ENCODE measurements at regions of chr1 and their contacts with region 1.

Region 1: GRCh38 chr1:32716312-32717148 is 14.0 kb upstream of the SYNC start:
- DNase-seq: peak; percentile 88
- ATAC-seq: peak; percentile 93
- H3K4me3 Mint-ChIP-seq: no peak overlapping the region
- H3K27ac Mint-ChIP-seq: no peak overlapping the region
- H3K4me1 Mint-ChIP-seq: peaks cover 12% of the 10 kb centered on the region
- H3K27me3 Mint-ChIP-seq: peaks cover 2% of the 10 kb centered on the region

Region 2: GRCh38 chr1:32521165-32521564 is 195.4 kb before region 1 on chr1:
- CTCF ChIA-PET with region 1: interaction called, 14 read pairs
- POLR2A ChIA-PET with region 1: no interaction called
- intact Hi-C with region 1: no loop called
- DNase-seq: peak; percentile 7
- ATAC-seq: no peak
- H3K4me3 Mint-ChIP-seq: peak overlapping the region; percentile 64
- H3K27ac Mint-ChIP-seq: no peak overlapping the region
- H3K4me1 Mint-ChIP-seq: peaks cover 6% of the 10 kb centered on the region
- H3K27me3 Mint-ChIP-seq: peaks cover 6% of the 10 kb centered on the region

Region 3: GRCh38 chr1:32753532-32754312 is 37.2 kb after region 1 on chr1:
- CTCF ChIA-PET with region 1: interaction called, 5 read pairs
- POLR2A ChIA-PET with region 1: no interaction called
- intact Hi-C with region 1: loop called in 1 of 2 experiments (anchors 5 kb)
- DNase-seq: peak; percentile 80
- ATAC-seq: peak; percentile 87
- H3K4me3 Mint-ChIP-seq: peak overlapping the region; percentile 53
- H3K27ac Mint-ChIP-seq: no peak overlapping the region
- H3K4me1 Mint-ChIP-seq: peaks cover 10% of the 10 kb centered on the region
- H3K27me3 Mint-ChIP-seq: peaks cover 8% of the 10 kb centered on the region

Region 4: DNA sequence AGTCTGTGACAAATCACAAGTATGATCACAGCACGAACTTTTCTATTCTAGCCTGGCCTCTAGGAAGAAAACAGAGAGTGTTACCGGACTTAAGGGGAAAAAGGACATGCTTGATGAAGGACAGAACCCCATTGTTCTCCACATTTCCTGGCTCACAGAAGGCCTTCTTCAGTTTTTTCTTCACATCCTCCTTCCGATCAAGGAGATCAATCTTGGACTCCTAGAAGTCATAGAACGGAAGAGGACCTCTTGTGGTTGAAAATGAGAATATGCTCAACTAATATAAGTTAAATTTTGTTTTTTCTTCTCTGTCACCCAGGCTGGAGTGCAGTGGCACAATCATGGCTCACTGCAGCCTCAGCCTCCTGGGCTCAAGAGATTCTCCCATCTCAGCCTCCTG is 70.3 kb after region 1 on chr1:
- CTCF ChIA-PET with region 1: interaction called, 6 read pairs
- POLR2A ChIA-PET with region 1: interaction called, 11 read pairs
- intact Hi-C with region 1: no loop called
- DNase-seq: no peak
- ATAC-seq: peak; percentile 30
- H3K4me3 Mint-ChIP-seq: no peak overlapping the region
- H3K27ac Mint-ChIP-seq: peak overlapping the region; percentile 25
- H3K4me1 Mint-ChIP-seq: no peaks in the 10 kb centered on the region
- H3K27me3 Mint-ChIP-seq: no peaks in the 10 kb centered on the region

Region 5: DNA sequence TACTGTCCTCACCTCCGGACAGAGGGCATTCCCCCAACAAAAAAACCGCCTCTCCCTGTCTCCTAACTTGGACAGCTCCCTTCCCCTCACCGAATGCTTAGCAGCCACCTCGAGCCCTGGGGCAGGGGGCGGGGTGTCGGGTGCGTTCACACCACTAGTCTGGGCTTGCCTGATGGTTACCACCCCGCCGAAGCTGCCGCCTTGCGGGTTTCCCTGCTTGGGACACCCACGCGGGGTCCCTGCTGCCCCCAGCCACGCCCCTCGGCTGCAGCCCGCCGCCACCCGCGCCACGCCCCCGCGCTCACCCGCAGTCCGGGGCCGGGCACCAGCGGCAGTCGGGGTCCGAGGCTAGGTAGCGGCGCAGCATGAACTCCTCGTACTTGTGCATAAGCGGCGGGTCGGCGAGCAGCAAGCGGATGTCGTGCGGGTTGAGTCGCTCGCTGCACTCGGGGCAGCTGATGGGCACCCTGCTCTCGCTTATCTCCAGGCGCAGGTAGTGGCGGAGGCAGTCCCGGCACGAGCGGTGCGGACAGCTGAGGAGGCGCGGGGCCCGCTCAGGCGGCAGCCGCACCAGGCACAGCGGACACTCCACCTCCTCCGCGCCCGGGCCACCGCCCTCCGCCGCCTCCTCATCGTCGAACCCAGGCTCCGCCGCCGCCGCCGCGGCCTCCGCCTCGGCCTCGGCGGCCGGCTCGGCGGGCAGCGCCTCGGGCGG is 247.4 kb after region 1 on chr1:
- CTCF ChIA-PET with region 1: no interaction called
- POLR2A ChIA-PET with region 1: no interaction called
- intact Hi-C with region 1: no loop called
- DNase-seq: peak; percentile 78
- ATAC-seq: peak; percentile 21
- H3K4me3 Mint-ChIP-seq: peak overlapping the region; percentile 77
- H3K27ac Mint-ChIP-seq: no peak overlapping the region
- H3K4me1 Mint-ChIP-seq: peaks cover 60% of the 10 kb centered on the region
- H3K27me3 Mint-ChIP-seq: peaks cover 2% of the 10 kb centered on the region

Region 6: GRCh38 chr1:33080885-33081553 is 364.5 kb after region 1 on chr1 and contains the start of gene AZIN2:
- CTCF ChIA-PET with region 1: no interaction called
- POLR2A ChIA-PET with region 1: no interaction called
- intact Hi-C with region 1: loop called in 1 of 2 experiments (anchors 2 kb)
- DNase-seq: peak; percentile 98
- ATAC-seq: peak; percentile 100
- H3K4me3 Mint-ChIP-seq: peak within 1 kb of the TSS; percentile 61
- H3K27ac Mint-ChIP-seq: peak within 1 kb of the TSS; percentile 43
- H3K4me1 Mint-ChIP-seq: peaks cover 17% of the 10 kb centered on the region
- H3K27me3 Mint-ChIP-seq: peaks cover 3% of the 10 kb centered on the region
- total RNA-seq, gene AZIN2: 0.98 to 2.1 TPM